ENCODE measurements at regions of chr22 and their contacts with region 1.

Region 1: DNA sequence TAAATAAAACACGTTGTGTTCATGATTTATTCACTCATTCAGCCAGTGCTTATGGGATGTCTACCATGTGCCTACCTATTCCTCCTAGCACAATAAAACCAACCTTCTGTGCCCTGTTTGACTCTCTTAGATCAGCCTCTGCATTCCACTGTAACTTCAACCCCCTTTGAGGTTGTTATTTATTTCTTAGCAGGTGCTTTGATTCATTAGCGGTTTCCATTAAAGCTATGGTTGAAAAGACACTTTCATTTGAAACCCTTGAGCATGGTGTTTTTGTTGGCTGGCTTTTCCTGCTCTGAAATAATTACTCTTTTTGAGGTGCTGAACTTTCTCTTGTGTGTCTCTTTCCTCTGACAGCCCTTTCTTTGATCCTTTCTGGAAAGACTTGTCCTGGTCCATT is 570.6 kb upstream of the LARGE1 start:
- DNase-seq: no peak
- H3K4me3 ChIP-seq: no peak overlapping the region
- CTCF ChIP-seq: no peak
- POLR2A ChIP-seq: no peak

Region 2: DNA sequence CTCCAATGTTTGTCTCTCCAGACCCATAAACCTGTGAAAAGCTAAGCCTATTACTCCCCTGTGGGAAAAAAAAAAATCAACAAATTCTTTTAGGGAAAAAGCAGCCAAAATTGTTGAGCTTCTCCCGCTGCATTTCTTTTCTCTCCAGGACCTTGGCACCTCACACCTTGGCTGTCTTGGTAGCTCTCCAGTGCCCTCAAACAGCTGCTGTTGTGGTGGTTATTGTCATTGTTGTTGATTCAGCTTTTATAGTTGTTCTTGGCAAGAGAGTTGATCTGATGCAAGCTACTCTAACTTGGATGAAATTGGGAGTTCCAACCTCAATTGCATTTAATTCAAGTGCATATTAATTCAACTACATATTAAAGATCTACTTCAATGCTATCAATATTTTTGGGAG is 53.7 kb before region 1 on chr22:
- intact Hi-C with region 1: loop called (anchors 10 kb)
- DNase-seq: no peak
- H3K4me3 ChIP-seq: no peak overlapping the region
- CTCF ChIP-seq: no peak
- POLR2A ChIP-seq: no peak

Measured in lower leg skin (tissue), 4 donors.